Activated CD4-positive, alpha-beta T cell treated with anti-CD3 and anti-CD28 coated beads, Interleukin-2, amount 10 ng/mL, durations not matched to agents 7 days and 5 days (primary cell): ENCODE measurements at regions of chr16 and their contacts with region 1.

Region 1: GRCh38 chr16:68064791-68065365 is 20.3 kb upstream of the NFATC3 start:
- DNase-seq: peak; percentile 81
- H3K4me3 Mint-ChIP-seq: no peak overlapping the region
- H3K27ac Mint-ChIP-seq: peak overlapping the region; percentile 89
- H3K4me1 Mint-ChIP-seq: peaks cover 84% of the 10 kb centered on the region
- H3K27me3 Mint-ChIP-seq: no peaks in the 10 kb centered on the region

Region 2: GRCh38 chr16:68085259-68086071 is 20.6 kb after region 1 on chr16 and contains the start of gene NFATC3:
- CTCF ChIA-PET with region 1: interaction called, 19 read pairs
- POLR2A ChIA-PET with region 1: interaction called, 6 read pairs
- DNase-seq: peak; percentile 98
- H3K4me3 Mint-ChIP-seq: peak within 1 kb of the TSS; percentile 94
- H3K27ac Mint-ChIP-seq: peak within 1 kb of the TSS; percentile 96
- H3K4me1 Mint-ChIP-seq: peaks cover 64% of the 10 kb centered on the region
- H3K27me3 Mint-ChIP-seq: no peaks in the 10 kb centered on the region
- total RNA-seq, gene NFATC3: 146 to 159 TPM

Region 3: GRCh38 chr16:68179196-68179795 is 114.4 kb after region 1 on chr16:
- CTCF ChIA-PET with region 1: no interaction called
- POLR2A ChIA-PET with region 1: no interaction called
- DNase-seq: no peak
- H3K4me3 Mint-ChIP-seq: no peak overlapping the region
- H3K27ac Mint-ChIP-seq: no peak overlapping the region
- H3K4me1 Mint-ChIP-seq: peaks cover 6% of the 10 kb centered on the region
- H3K27me3 Mint-ChIP-seq: no peaks in the 10 kb centered on the region

Region 4: DNA sequence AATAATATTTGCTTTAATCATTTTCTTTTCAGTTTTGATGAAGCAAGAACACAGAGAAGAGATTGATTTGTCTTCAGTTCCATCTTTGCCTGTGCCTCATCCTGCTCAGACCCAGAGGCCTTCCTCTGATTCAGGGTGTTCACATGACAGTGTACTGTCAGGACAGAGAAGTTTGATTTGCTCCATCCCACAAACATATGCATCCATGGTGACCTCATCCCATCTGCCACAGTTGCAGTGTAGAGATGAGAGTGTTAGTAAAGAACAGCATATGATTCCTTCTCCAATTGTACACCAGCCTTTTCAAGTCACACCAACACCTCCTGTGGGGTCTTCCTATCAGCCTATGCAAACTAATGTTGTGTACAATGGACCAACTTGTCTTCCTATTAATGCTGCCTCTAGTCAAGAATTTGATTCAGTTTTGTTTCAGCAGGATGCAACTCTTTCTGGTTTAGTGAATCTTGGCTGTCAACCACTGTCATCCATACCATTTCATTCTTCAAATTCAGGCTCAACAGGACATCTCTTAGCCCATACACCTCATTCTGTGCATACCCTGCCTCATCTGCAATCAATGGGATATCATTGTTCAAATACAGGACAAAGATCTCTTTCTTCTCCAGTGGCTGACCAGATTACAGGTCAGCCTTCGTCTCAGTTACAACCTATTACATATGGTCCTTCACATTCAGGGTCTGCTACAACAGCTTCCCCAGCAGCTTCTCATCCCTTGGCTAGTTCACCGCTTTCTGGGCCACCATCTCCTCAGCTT is 126.0 kb after region 1 on chr16:
- CTCF ChIA-PET with region 1: no interaction called
- POLR2A ChIA-PET with region 1: no interaction called
- DNase-seq: no peak
- H3K4me3 Mint-ChIP-seq: no peak overlapping the region
- H3K27ac Mint-ChIP-seq: no peak overlapping the region
- H3K4me1 Mint-ChIP-seq: no peaks in the 10 kb centered on the region
- H3K27me3 Mint-ChIP-seq: no peaks in the 10 kb centered on the region